ENCODE measurements at regions of chr4 and their contacts with region 1.

Region 1: DNA sequence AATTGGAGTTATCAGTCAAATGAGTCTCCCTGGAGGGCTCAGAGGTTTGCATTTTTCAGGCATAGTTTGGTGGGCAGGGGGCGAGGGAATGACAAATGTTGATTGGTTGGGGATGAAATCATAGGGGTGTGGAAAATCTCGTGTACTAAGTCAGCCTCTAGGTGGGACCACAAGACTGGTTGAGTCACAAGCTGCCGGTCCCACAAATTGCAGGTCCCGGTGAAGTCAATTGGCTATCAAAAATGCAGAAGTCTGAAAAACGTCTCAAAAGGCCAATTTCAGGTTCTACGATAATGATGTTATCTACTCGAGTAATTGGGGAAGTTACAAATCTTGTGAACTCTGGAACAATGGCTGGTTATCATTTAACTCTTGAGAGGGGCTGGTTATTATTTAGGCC is 98.8 kb upstream of the DHX15 start:
- DNase-seq: no peak
- ATAC-seq: no peak
- H3K4me3 ChIP-seq: no peak overlapping the region
- H3K27ac ChIP-seq: no peak overlapping the region
- H3K4me1 ChIP-seq: no peaks in the 10 kb centered on the region
- H3K27me3 ChIP-seq: no peaks in the 10 kb centered on the region
- CTCF ChIP-seq: no peak
- POLR2A ChIP-seq: no peak

Region 2: GRCh38 chr4:24489870-24490269 is 193.2 kb before region 1 on chr4:
- intact Hi-C with region 1: loop called (anchors 5 kb)
- DNase-seq: peak in 1 of 4 donors; percentile 39
- ATAC-seq: no peak
- H3K4me3 ChIP-seq: no peak overlapping the region
- H3K27ac ChIP-seq: no peak overlapping the region
- H3K4me1 ChIP-seq: peaks cover 7% of the 10 kb centered on the region
- H3K27me3 ChIP-seq: no peaks in the 10 kb centered on the region
- CTCF ChIP-seq: no peak
- POLR2A ChIP-seq: no peak

Region 3: DNA sequence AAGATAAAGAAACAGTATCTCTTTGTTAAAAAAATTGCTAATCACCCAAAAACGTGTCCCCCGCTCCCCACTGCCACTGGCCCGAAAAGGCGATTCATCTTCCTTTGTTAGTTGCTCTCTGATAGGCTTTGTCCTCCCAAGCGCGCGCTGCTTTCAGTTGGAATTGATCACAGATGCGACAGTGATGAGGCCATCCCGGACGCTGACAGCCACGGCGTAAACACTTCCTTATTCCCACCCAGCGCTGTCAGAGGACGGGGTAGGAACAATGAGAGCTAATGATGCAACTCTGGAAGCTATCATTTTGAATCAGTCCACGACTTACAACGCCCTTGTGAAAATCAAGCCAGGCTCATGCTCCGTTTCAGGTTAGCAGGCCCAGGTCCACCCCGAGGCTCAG is 133.7 kb after region 1 on chr4:
- intact Hi-C with region 1: no loop called
- DNase-seq: no peak
- ATAC-seq: no peak
- H3K4me3 ChIP-seq: no peak overlapping the region
- H3K27ac ChIP-seq: no peak overlapping the region
- H3K4me1 ChIP-seq: no peaks in the 10 kb centered on the region
- H3K27me3 ChIP-seq: no peaks in the 10 kb centered on the region
- CTCF ChIP-seq: no peak
- POLR2A ChIP-seq: no peak

Measured in body of pancreas (tissue), 4 donors.